ENCODE measurements at regions of chr16 and their contacts with region 1.

Region 1: DNA sequence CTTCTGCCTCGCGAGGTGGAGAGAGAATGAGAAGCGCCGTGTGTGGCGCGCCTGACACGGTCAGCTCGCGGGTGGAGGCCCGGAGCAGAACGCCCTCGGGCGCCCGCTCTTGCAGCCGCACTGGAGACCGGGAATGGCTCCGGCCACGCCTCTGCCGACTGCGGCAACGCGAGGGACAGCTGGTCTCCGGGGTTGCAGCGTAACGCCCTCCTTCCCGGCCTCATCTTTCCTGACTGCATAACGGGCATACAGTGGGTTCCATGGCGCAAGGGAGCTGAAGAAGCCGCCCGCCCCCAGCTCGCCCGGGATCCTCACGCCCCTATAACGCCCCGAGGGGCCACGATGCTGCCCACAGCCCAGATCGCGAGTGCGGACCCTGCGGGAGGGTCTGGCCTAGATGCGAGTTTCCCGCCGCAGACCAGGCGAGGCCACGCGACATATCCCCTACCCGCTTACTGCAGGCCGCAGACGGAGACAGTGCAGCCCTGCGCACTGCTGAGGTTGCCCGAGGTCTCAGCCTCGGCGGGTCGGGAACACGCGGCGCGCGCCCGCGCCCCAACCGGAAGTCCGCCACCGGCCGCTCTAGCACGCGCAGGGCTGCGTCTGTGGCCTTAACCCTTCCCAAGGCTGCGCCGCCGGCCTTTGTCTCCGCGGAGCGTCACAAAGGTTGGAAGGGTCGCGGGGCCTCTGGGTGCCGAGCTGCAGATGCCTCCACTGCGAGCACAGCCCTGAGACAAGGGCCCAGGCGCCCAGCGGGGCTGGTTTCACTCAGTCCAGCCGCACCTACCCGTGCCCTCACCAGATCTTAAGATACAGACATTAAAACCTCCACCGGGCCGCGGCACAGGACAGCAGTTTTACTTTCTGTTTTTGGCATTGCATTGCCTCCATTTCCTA is 18.8 kb downstream of the BCL7C start:
- DNase-seq: peak; percentile 87
- H3K4me3 ChIP-seq: peak overlapping the region; percentile 75 to 95 (median 89)
- H3K27ac ChIP-seq: peak overlapping the region; percentile 68
- H3K4me1 ChIP-seq: peaks cover 17% of the 10 kb centered on the region
- H3K27me3 ChIP-seq: no peaks in the 10 kb centered on the region
- CTCF ChIP-seq: no peak

Region 2: GRCh38 chr16:30534368-30535105 is 340.5 kb before region 1 on chr16 and contains the start of gene ZNF747:
- CTCF ChIA-PET with region 1: no interaction called
- dilution Hi-C with region 1: no loop called
- in situ Hi-C with region 1: no loop called
- intact Hi-C with region 1: no loop called
- DNase-seq: peak; percentile 75
- H3K4me3 ChIP-seq: peak within 1 kb of the TSS; percentile 50 to 64 (median 57)
- H3K27ac ChIP-seq: peak within 1 kb of the TSS; percentile 71
- H3K4me1 ChIP-seq: peaks cover 15% of the 10 kb centered on the region
- H3K27me3 ChIP-seq: no peaks in the 10 kb centered on the region
- CTCF ChIP-seq: peak in 1 of 2 donors; percentile 7
- total RNA-seq, gene ZNF747: 6.7 to 11.0 TPM

Region 3: GRCh38 chr16:30775392-30776188 is 99.5 kb before region 1 on chr16:
- CTCF ChIA-PET with region 1: no interaction called
- dilution Hi-C with region 1: loop called (anchors 5 kb)
- in situ Hi-C with region 1: no loop called
- intact Hi-C with region 1: no loop called
- DNase-seq: peak; percentile 75
- H3K4me3 ChIP-seq: peak overlapping the region; percentile 44 to 78 (median 59)
- H3K27ac ChIP-seq: peak overlapping the region; percentile 8
- H3K4me1 ChIP-seq: peaks cover 14% of the 10 kb centered on the region
- H3K27me3 ChIP-seq: no peaks in the 10 kb centered on the region
- CTCF ChIP-seq: no peak

Region 4: DNA sequence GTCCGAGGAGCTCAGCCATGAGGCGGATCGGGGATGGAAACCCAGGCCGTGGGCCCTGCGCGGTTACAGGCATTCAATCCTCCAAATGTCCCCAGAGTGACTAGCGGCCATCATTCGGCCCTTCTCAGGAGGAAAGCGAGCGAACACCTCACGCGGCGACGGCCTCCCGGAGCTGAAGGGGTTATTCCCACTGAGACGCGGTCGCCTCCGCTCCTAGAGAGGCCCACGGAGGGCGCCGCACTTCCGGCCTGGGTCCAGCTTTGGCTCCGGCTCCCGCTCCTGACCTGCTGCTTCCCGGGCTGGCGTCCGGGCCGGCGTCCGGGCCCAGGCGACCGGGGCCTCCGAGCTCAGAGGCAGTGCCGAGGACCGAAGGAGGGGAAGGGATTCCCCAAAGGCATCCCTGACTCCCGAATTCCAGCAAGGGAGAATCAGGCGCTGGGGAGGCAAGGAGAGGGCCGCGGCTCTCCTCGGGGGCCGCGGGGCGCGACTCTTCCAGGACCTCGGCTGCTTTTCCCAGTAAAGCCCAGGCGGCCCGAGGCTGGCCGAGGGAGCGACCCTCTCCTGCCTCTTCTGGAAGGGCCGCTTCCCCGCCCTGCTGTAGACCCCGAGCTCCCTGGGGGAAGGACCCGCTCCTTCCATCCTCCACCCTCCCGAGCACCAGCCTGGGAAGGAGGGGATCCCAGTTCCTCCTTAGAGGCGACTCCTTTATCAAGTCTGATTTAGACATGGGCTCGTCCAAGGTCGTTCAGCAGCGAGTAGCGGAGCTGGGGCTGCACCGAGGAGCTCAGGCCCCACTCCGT is 69.5 kb before region 1 on chr16:
- CTCF ChIA-PET with region 1: no interaction called
- dilution Hi-C with region 1: no loop called
- in situ Hi-C with region 1: no loop called
- intact Hi-C with region 1: loop called (anchors 1 kb)
- DNase-seq: peak; percentile 70
- H3K4me3 ChIP-seq: peak overlapping the region; percentile 64 to 83 (median 80)
- H3K27ac ChIP-seq: peak overlapping the region; percentile 51
- H3K4me1 ChIP-seq: peaks cover 13% of the 10 kb centered on the region
- H3K27me3 ChIP-seq: no peaks in the 10 kb centered on the region
- CTCF ChIP-seq: no peak

Region 5: GRCh38 chr16:30844671-30845449 is 30.2 kb before region 1 on chr16:
- CTCF ChIA-PET with region 1: no interaction called
- dilution Hi-C with region 1: no loop called
- in situ Hi-C with region 1: no loop called
- intact Hi-C with region 1: loop called (anchors 1 kb)
- DNase-seq: peak; percentile 68
- H3K4me3 ChIP-seq: no peak overlapping the region
- H3K27ac ChIP-seq: no peak overlapping the region
- H3K4me1 ChIP-seq: no peaks in the 10 kb centered on the region
- H3K27me3 ChIP-seq: no peaks in the 10 kb centered on the region
- CTCF ChIP-seq: peak; percentile 88 to 93

Region 6: GRCh38 chr16:30948667-30949649 is 73.9 kb after region 1 on chr16 and contains the start of gene ORAI3:
- CTCF ChIA-PET with region 1: no interaction called
- dilution Hi-C with region 1: loop called (anchors 5 kb)
- in situ Hi-C with region 1: no loop called
- intact Hi-C with region 1: no loop called
- DNase-seq: peak; percentile 60
- H3K4me3 ChIP-seq: peak within 1 kb of the TSS; percentile 63 to 76 (median 65)
- H3K27ac ChIP-seq: peak within 1 kb of the TSS; percentile 69
- H3K4me1 ChIP-seq: peaks cover 24% of the 10 kb centered on the region
- H3K27me3 ChIP-seq: no peaks in the 10 kb centered on the region
- CTCF ChIP-seq: no peak
- total RNA-seq, gene ORAI3: 31.7 to 37.2 TPM